CD4-positive, alpha-beta T cell (primary cell): ENCODE measurements at regions of chr1 and their contacts with region 1.

Region 1: GRCh38 chr1:89358287-89358893 is 5.5 kb upstream of the GBP6 start:
- DNase-seq: peak; percentile 73 to 90 (median 82)
- ATAC-seq: peak; percentile 98
- H3K4me3 ChIP-seq: no peak overlapping the region
- H3K4me3 Mint-ChIP-seq: no peak overlapping the region
- H3K27ac ChIP-seq: no peak overlapping the region
- H3K27ac Mint-ChIP-seq: no peak overlapping the region
- H3K4me1 ChIP-seq: peaks cover 11% of the 10 kb centered on the region
- H3K4me1 Mint-ChIP-seq: peaks cover 9% of the 10 kb centered on the region
- H3K27me3 ChIP-seq: no peaks in the 10 kb centered on the region
- H3K27me3 Mint-ChIP-seq: no peaks in the 10 kb centered on the region
- CTCF ChIP-seq: peak; percentile 87

Region 2: GRCh38 chr1:89065079-89065868 is 293.1 kb before region 1 on chr1 and contains the start of gene GBP1:
- CTCF ChIA-PET with region 1: no interaction called
- POLR2A ChIA-PET with region 1: interaction called, 3 read pairs
- intact Hi-C with region 1: loop called in 1 of 2 experiments (anchors 5 kb)
- DNase-seq: peak in 4 of 14 experiments; percentile 14 to 81 (median 71)
- ATAC-seq: peak; percentile 87
- H3K4me3 ChIP-seq: peak within 1 kb of the TSS; percentile 61
- H3K4me3 Mint-ChIP-seq: peak within 1 kb of the TSS; percentile 97
- H3K27ac ChIP-seq: peak within 1 kb of the TSS; percentile 69 to 70
- H3K27ac Mint-ChIP-seq: peak within 1 kb of the TSS; percentile 93
- H3K4me1 ChIP-seq: peaks cover 13% of the 10 kb centered on the region
- H3K4me1 Mint-ChIP-seq: peaks cover 74% of the 10 kb centered on the region
- H3K27me3 ChIP-seq: no peaks in the 10 kb centered on the region
- H3K27me3 Mint-ChIP-seq: no peaks in the 10 kb centered on the region
- CTCF ChIP-seq: no peak
- total RNA-seq, gene GBP1: 15.5 to 16.5 TPM

Region 3: DNA sequence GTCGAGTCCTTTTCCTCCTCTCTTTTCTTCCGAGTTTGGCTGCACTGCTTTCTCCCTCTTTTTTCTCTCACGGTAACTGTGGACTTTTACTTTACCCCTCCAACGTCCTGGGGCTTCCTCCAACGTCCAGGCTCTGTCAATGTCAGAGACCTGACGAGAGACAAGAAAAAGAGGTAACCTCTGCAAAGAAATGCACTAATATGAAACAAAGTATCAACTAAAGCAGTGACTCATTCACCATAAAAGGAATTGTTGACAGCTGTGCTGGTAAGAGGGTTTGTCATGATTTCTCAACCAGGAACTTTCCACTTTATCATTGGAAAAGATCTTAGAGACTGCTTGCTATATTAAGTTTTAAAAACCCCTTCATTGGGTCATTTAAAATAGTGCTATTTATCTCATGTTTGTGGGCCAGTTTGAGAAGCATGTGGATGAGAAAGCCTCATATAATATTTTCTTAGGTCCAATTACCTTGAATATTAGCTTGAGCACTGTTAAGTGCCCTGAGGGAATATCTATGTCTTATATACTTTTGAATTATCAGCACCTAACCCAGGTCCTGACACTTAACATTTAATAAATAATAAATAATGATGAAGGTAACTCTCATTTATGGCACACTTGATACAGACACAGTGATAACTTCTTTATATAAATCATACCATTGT is 232.3 kb before region 1 on chr1 and contains the start of gene GBP2:
- CTCF ChIA-PET with region 1: interaction called, 3 read pairs
- POLR2A ChIA-PET with region 1: interaction called, 13 read pairs
- intact Hi-C with region 1: loop called in 1 of 2 experiments (anchors 1 kb)
- DNase-seq: peak in 7 of 14 experiments; percentile 18 to 86 (median 41)
- ATAC-seq: peak; percentile 81
- H3K4me3 ChIP-seq: peak within 1 kb of the TSS; percentile 83
- H3K4me3 Mint-ChIP-seq: peak within 1 kb of the TSS; percentile 100
- H3K27ac ChIP-seq: peak within 1 kb of the TSS; percentile 51 to 86
- H3K27ac Mint-ChIP-seq: peak within 1 kb of the TSS; percentile 96
- H3K4me1 ChIP-seq: peaks cover 23% of the 10 kb centered on the region
- H3K4me1 Mint-ChIP-seq: peaks cover 76% of the 10 kb centered on the region
- H3K27me3 ChIP-seq: no peaks in the 10 kb centered on the region
- H3K27me3 Mint-ChIP-seq: no peaks in the 10 kb centered on the region
- CTCF ChIP-seq: no peak
- total RNA-seq, gene GBP2: 87.6 to 91.8 TPM

Region 4: DNA sequence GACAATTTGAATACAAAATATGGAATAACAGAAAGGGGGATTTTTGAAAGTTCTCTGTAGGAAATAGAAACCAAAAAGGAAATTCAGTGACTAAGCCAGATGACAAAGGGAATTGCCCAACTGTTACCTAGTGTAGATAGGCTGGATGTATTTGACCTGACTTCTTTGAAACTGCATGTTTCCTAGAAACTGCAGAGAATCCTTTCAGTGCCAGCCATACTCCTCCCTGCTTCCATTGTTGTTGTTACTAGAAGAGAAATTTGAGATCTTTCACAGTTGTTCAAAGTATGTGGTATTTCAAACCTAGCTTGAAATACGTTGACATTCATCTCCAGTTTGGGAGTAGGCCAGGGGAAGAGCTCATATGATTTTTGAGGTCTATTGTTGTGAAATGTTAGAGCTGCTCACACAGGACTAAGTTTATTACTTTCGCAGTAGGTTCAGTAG is 84.0 kb before region 1 on chr1:
- CTCF ChIA-PET with region 1: interaction called, 5 read pairs
- POLR2A ChIA-PET with region 1: interaction called, 9 read pairs
- intact Hi-C with region 1: loop called in 1 of 2 experiments (anchors 5 kb)
- DNase-seq: peak in 3 of 14 experiments; percentile 78 to 81 (median 78)
- ATAC-seq: no peak
- H3K4me3 ChIP-seq: peak overlapping the region; percentile 24
- H3K4me3 Mint-ChIP-seq: peak overlapping the region; percentile 87
- H3K27ac ChIP-seq: peak overlapping the region; percentile 24 to 55
- H3K27ac Mint-ChIP-seq: peak overlapping the region; percentile 85
- H3K4me1 ChIP-seq: peaks cover 48% of the 10 kb centered on the region
- H3K4me1 Mint-ChIP-seq: peaks cover 83% of the 10 kb centered on the region
- H3K27me3 ChIP-seq: no peaks in the 10 kb centered on the region
- H3K27me3 Mint-ChIP-seq: no peaks in the 10 kb centered on the region
- CTCF ChIP-seq: no peak

Region 5: DNA sequence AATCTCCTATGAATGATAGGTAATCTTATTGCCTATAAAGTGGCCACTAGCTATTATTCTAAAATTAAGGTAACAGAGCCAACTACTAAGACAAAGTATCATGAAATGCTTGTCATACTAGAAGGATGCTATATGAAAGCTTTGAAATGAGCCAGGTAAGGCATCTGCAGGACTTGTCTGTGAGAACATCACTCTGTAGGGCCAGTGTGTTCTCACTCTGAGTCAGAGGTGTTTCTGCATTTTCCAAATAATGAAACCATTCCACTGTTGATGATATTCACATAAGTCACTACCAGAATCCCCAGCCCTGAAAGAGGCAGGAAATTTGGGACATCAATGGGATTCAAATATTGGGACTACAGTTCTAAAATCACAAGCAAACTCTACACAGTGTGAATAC is 59.9 kb before region 1 on chr1:
- CTCF ChIA-PET with region 1: no interaction called
- POLR2A ChIA-PET with region 1: interaction called, 5 read pairs
- intact Hi-C with region 1: loop called in 1 of 2 experiments (anchors 5 kb)
- DNase-seq: no peak
- ATAC-seq: no peak
- H3K4me3 ChIP-seq: no peak overlapping the region
- H3K4me3 Mint-ChIP-seq: no peak overlapping the region
- H3K27ac ChIP-seq: no peak overlapping the region
- H3K27ac Mint-ChIP-seq: no peak overlapping the region
- H3K4me1 ChIP-seq: peaks cover 19% of the 10 kb centered on the region
- H3K4me1 Mint-ChIP-seq: peaks cover 45% of the 10 kb centered on the region
- H3K27me3 ChIP-seq: no peaks in the 10 kb centered on the region
- H3K27me3 Mint-ChIP-seq: no peaks in the 10 kb centered on the region
- CTCF ChIP-seq: no peak

Region 6: DNA sequence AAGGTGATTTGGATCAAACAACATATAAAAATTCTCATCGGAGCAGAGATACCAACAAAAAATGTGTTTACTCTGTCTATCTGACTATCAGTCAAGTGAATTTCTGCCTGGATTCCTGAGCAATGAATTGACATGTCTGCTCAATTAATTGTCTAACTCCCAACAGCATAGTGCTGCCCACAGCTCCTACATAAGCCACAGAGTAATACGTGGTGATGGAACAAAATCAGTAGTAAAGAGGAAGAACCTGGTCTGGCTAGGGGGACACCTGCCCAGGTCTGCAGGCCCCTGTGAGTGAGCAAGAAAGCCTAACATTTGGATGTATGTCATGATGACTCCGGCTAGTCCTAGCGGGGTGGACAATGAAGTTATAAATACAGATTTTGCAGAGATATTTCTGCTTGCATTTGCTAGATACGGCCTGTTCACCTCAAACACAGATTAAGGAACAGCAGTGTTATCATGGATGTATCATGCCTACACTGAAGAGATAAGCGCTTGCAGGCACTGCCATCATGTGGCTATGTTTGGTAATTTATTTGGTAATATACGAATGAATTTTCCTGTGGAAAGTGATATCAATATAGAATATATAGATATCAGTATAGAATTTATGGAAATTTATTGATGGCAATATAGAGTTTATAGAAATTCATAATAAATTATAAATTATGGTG is 96.6 kb after region 1 on chr1:
- CTCF ChIA-PET with region 1: interaction called, 3 read pairs
- POLR2A ChIA-PET with region 1: no interaction called
- intact Hi-C with region 1: loop called (anchors 1 to 5 kb)
- DNase-seq: peak; percentile 37 to 80 (median 51)
- ATAC-seq: peak; percentile 96
- H3K4me3 ChIP-seq: no peak overlapping the region
- H3K4me3 Mint-ChIP-seq: no peak overlapping the region
- H3K27ac ChIP-seq: no peak overlapping the region
- H3K27ac Mint-ChIP-seq: no peak overlapping the region
- H3K4me1 ChIP-seq: no peaks in the 10 kb centered on the region
- H3K4me1 Mint-ChIP-seq: peaks cover 9% of the 10 kb centered on the region
- H3K27me3 ChIP-seq: no peaks in the 10 kb centered on the region
- H3K27me3 Mint-ChIP-seq: peaks cover 4% of the 10 kb centered on the region
- CTCF ChIP-seq: peak; percentile 84